HAP-1 (cell line): ENCODE measurements at regions of chr12 and their contacts with region 1.

Region 1: DNA sequence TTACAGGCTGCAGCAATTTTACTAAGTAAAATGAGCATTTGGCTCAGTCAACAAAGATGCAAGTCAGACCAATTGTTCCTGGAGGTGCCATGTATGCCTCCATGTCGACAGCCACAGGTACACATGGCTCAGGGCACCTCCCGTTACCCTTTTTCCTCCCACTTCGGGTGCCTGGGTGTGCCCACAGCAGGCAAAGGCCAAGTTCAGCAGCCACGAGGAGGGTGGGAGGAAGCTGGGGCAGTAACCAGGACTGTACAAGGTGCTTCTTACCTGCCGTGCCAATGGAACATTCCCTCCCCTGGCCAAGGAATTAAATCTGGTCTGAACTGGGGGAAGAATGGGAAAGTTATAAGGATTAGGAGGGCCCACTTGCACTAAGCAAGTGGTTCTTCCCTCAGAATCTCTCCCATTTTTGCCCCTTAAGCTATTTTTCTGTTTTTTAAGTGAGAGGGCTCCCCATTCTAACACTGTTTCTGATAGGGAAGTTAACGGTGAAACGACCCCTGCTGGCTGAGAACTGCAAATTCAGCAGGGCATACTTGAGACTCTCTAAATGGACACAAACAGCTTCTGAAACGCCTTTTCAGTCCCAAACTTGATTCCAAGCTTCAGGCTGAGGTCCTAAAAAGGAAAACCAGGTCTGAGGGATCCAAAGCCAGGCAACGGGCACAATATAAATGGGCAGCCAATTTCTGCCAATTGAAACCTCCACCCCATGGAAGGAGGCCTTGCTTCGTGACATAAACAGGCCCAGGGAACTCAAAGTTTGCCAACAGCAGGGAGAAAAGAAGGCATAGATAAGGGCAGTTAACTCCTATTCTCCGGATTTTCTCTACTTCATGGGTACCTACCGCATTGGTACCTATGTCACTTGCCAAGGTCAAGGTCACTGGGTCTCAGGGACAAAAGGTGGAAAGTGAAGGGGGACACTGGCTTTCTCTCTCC is 24.8 kb downstream of the CLECL1 start:
- DNase-seq: peak; percentile 46 to 71
- H3K4me3 ChIP-seq: no peak overlapping the region
- H3K4me1 ChIP-seq: no peaks in the 10 kb centered on the region
- H3K27me3 ChIP-seq: no peaks in the 10 kb centered on the region

Region 2: GRCh38 chr12:9331218-9331626 is 376.9 kb before region 1 on chr12:
- in situ Hi-C with region 1: loop called (anchors 10 kb)
- DNase-seq: peak; percentile 61 to 83
- H3K4me3 ChIP-seq: no peak overlapping the region
- H3K4me1 ChIP-seq: no peaks in the 10 kb centered on the region
- H3K27me3 ChIP-seq: no peaks in the 10 kb centered on the region

Region 3: GRCh38 chr12:9364224-9365176 is 343.6 kb before region 1 on chr12:
- in situ Hi-C with region 1: no loop called
- DNase-seq: peak; percentile 78 to 79
- H3K4me3 ChIP-seq: no peak overlapping the region
- H3K4me1 ChIP-seq: peaks cover 12% of the 10 kb centered on the region
- H3K27me3 ChIP-seq: no peaks in the 10 kb centered on the region

Region 4: DNA sequence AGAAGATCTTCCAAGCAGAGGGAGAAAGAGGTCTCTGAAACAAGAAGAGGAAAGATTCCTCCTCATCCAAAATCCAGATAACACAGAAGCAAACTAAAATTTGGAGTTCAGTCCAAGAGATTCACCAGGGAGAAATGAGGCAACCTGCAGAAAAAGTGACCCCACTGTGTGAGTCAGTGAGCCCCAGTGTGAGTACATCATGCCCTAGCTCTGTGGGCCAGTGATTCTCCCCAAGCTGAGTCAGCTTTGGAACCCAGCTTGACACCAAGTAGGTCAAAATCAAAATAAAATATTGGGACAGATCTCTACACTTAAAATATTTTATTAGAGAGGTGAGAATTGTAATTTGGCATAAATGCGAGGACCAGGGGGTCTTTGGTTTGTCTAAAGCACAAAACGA is 143.8 kb after region 1 on chr12:
- in situ Hi-C with region 1: no loop called
- DNase-seq: no peak
- H3K4me3 ChIP-seq: no peak overlapping the region
- H3K4me1 ChIP-seq: peaks cover 16% of the 10 kb centered on the region
- H3K27me3 ChIP-seq: no peaks in the 10 kb centered on the region